MCF 10A (cell line): ENCODE measurements at regions of chr6 and their contacts with region 1.

Region 1: DNA sequence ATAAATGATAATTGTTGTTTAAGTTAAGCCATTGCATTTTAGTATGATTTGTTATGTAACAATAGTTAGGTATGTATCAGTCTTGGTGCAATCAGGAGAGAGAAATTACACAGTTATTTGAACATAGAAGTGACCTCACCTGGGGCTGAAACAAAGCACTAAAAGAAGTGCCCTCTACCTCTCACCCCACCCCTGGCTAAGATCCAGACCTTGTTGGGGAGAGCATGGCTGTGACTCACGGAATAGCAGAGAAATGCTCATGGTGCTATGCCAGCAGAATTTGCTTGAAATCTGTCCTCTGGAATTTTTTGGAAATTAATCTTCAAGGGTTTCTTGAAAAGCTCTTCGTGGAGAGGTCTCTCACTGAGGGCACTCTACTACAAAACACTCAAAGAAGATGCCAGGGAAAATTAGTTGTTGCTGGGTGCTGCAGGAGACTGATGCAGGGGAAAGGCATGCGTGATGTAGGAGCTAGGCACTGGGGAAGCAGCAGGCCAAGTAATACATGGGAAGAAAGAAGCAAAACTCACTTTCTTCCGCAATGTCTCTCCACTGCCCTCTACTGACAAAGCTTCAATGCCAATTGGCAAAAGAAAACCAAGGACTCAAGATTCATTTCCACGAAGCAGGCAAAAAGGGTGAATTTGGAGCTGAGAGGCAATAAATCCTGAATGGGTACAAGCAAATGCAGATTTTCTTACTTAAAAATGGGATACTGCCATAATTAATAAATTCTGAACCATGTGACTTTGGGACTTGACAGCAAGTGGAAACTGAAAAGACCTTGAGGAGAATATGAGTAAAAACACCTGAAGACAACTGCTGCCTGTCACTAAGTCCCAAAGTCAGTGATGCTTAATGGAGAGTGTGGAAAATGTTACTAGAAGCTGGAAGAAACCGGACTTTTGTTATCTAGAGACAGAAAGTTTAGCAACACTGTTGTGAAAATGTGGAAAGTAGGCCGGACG is 136.3 kb upstream of the ZNF184 start:
- DNase-seq: peak; percentile 89
- H3K4me3 Mint-ChIP-seq: peak overlapping the region; percentile 47
- H3K27ac Mint-ChIP-seq: peak overlapping the region; percentile 83
- H3K4me1 Mint-ChIP-seq: peaks cover 22% of the 10 kb centered on the region
- H3K27me3 Mint-ChIP-seq: no peaks in the 10 kb centered on the region
- CTCF ChIP-seq: peak; percentile 77

Region 2: DNA sequence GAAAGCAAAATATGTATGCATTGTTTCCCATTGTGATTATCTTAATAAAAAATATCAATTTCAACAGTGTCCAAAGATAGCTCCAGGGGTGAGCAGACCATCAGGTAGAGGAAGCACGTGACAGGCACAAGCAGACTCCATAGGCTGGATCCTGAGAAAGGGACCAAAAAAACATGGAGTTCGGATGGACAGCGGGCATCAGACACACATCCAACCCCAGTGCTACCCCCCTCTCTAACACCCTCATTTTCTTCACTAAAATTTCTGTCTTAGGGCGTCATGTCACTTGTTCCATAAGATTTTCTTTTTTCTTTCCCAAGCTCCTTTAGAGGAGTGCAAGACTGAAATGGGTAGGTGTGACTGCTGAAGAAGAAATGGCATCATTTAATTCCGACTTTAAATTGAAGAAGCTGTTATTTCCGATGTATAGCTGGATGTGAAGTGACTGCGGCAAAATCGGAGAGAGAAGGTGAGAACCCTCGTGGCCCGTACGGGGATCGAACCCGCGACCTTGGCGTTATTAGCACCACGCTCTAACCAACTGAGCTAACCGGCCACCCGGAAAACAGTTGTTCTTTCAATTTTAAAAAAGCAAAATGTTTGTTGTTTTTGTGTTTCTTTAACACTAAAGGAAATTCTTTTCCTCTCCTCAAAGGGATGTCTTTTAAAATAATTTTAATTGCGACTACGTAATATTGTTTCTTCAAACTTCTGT is 372.0 kb before region 1 on chr6:
- CTCF ChIA-PET with region 1: no interaction called
- POLR2A ChIA-PET with region 1: interaction called, 3 read pairs
- intact Hi-C with region 1: loop called (anchors 10 kb)
- DNase-seq: peak; percentile 52
- H3K4me3 Mint-ChIP-seq: peak overlapping the region; percentile 75
- H3K27ac Mint-ChIP-seq: peak overlapping the region; percentile 51
- H3K4me1 Mint-ChIP-seq: peaks cover 13% of the 10 kb centered on the region
- H3K27me3 Mint-ChIP-seq: no peaks in the 10 kb centered on the region
- CTCF ChIP-seq: no peak

Region 3: GRCh38 chr6:27312146-27312949 is 296.9 kb before region 1 on chr6 and contains the start of gene POM121L2:
- CTCF ChIA-PET with region 1: interaction called, 16 read pairs
- POLR2A ChIA-PET with region 1: interaction called, 4 read pairs
- intact Hi-C with region 1: loop called (anchors 2 kb)
- DNase-seq: peak; percentile 84
- H3K4me3 Mint-ChIP-seq: peak within 1 kb of the TSS; percentile 73
- H3K27ac Mint-ChIP-seq: no peak within 1 kb of the TSS
- H3K4me1 Mint-ChIP-seq: no peaks in the 10 kb centered on the region
- H3K27me3 Mint-ChIP-seq: peaks cover 12% of the 10 kb centered on the region
- CTCF ChIP-seq: peak; percentile 87
- total RNA-seq, gene POM121L2: not detected in 2 replicates

Region 4: DNA sequence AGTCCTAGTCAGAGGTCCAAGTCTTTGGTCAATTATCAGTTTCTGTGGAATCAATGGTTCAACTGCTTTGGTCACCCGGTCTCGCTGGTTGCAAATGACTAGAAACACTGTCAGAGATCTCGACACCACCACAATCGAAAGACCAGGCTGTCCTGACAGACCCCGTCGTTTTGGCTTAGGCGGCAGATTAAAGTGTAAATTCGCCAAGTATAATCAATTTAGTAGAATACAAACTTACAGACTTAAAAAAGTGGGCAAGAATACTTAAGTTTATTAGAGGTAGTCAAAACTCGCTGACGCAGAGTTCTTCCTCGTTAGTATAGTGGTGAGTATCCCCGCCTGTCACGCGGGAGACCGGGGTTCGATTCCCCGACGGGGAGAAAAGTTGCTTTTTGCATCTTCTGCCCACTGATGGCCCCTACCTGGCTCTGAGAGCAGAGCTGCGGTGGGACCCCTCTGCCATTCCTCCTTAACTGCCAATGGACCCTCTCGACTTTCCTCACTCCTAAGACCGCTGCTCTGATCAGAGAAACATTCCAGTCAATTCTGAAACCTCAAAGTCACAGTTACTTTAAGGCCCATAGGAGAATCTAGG is 105.7 kb before region 1 on chr6:
- CTCF ChIA-PET with region 1: interaction called, 13 read pairs
- POLR2A ChIA-PET with region 1: interaction called, 7 read pairs
- intact Hi-C with region 1: no loop called
- DNase-seq: peak; percentile 74
- H3K4me3 Mint-ChIP-seq: peak overlapping the region; percentile 83
- H3K27ac Mint-ChIP-seq: peak overlapping the region; percentile 84
- H3K4me1 Mint-ChIP-seq: peaks cover 11% of the 10 kb centered on the region
- H3K27me3 Mint-ChIP-seq: no peaks in the 10 kb centered on the region
- CTCF ChIP-seq: no peak

Region 5: DNA sequence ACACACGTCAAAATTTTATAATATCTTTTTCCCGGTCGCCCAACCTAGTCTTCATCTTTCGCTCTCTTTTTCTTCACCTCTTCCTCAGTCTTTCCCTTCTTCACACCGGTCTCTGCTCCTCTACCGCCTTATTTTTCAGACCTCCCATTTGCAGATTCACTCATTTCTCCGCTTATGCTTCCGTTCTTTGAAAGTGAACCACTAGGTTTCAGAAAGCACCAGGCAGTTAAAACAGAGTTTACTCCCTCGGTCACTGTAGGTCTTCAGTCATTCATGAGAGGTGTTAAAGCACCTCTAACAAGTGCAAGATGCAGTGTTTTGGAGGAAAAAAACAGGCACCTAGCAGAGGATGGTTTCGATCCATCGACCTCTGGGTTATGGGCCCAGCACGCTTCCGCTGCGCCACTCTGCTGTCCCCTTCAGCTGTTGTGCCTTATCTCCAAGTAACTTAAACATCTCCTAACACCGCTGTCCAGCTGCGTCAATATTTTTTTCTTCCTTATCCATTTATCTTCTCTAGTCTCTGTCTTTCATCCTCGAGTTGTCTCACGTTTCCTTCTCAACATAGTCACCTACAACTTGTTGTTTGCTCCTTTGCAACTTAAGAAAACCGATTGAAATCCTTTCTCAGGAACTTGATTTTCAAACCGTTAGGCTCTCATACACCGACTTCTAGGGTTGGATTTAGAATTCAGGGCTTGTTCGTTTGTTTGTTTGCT is 16.6 kb before region 1 on chr6:
- CTCF ChIA-PET with region 1: interaction called, 14 read pairs
- POLR2A ChIA-PET with region 1: interaction called, 6 read pairs
- intact Hi-C with region 1: no loop called
- DNase-seq: peak; percentile 82
- H3K4me3 Mint-ChIP-seq: no peak overlapping the region
- H3K27ac Mint-ChIP-seq: no peak overlapping the region
- H3K4me1 Mint-ChIP-seq: no peaks in the 10 kb centered on the region
- H3K27me3 Mint-ChIP-seq: no peaks in the 10 kb centered on the region
- CTCF ChIP-seq: no peak

Region 6: GRCh38 chr6:29082457-29082856 is 1473.3 kb after region 1 on chr6:
- CTCF ChIA-PET with region 1: no interaction called
- POLR2A ChIA-PET with region 1: no interaction called
- intact Hi-C with region 1: no loop called
- DNase-seq: no peak
- H3K4me3 Mint-ChIP-seq: no peak overlapping the region
- H3K27ac Mint-ChIP-seq: no peak overlapping the region
- H3K4me1 Mint-ChIP-seq: no peaks in the 10 kb centered on the region
- H3K27me3 Mint-ChIP-seq: peaks cover 45% of the 10 kb centered on the region
- CTCF ChIP-seq: no peak